ENCODE measurements at regions of chr11 and their contacts with region 1.

Region 1: DNA sequence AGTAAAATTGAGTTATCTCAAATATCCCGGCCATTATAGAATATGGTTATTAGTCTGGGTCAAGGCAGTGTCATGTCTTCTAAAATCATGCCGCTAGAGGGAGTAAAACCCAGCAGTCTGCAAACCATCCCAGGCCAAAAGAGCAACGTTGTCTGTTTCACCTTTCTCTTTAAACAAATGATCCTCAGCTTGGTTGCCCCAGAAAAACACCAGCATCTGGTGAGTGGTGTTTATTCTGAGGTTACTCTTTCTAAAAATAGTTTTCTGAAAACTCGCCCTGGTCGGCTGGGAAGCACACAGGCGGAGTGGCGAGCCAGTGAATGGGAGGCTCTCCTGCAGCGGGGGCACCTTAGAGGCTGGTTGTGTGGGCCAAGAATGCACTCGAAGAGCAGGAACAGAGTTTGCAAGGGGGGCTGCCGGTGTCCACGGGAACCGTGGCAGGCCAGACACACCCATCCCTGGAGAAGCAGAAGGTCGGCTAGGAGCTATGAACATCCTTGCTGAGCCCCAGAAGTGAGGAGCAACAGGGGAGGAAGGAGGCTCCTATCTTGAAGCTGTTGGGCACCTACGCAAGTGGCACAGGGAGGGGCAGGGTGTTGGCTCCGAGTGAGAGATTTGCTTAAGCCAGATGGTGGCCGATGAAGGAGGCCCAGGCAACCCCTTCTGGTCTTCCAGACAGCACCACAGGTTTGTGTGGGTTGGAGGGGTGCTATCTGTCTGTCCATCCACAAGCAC is 297.1 kb downstream of the ETS1 start:
- DNase-seq: peak; percentile 32 to 68 (median 59)
- ATAC-seq: peak; percentile 85 to 88
- H3K4me3 ChIP-seq: no peak overlapping the region
- H3K27ac ChIP-seq: peak overlapping the region; percentile 7
- H3K4me1 ChIP-seq: no peaks in the 10 kb centered on the region
- H3K27me3 ChIP-seq: no peaks in the 10 kb centered on the region

Region 2: GRCh38 chr11:128467610-128468041 is 177.4 kb after region 1 on chr11:
- intact Hi-C with region 1: loop called in 1 of 4 experiments (anchors 5 kb)
- DNase-seq: peak; percentile 50 to 65 (median 63)
- ATAC-seq: peak; percentile 32 to 48
- H3K4me3 ChIP-seq: no peak overlapping the region
- H3K27ac ChIP-seq: peak overlapping the region; percentile 79
- H3K4me1 ChIP-seq: peaks cover 36% of the 10 kb centered on the region
- H3K27me3 ChIP-seq: no peaks in the 10 kb centered on the region

Region 3: DNA sequence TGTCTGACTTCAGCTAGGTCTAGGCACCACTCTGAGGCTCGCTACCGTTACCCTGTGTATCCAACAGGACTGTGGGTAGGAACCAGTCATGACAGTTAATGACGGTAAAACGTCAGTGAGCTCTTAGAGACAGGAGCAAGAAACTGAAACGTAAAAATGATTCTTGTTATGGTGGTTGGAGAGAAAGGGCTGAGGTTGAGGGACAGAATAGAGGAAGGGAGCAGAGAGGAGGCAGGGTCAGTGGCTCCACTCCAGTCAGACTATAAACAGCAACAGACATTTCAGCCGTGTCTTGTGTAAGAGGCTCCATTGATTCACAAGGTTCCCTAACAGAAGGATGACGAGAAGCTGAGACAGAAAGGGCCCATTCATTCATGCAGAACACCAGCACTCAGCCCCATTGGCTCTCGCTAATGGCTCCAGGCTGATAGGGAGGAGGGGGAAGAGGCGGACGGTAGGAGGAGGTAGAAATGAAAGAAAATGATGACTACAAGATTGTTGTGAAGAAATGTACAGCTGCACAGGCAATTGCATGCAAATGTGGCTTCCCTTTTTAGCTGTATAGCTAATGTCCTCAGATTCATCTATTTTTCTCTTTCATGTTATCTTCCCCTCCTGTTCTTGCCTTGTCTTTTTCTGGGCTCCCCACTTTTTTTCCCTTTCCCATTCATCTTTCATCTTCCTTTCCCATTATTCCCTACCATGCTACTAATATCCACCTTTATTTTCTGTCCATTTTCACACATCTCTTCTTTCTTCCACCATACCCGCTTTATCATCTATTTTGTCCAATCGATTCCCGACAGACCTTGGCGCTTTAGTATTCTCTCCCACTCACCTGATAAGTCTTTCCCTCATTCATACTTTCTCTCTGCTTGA is 262.7 kb after region 1 on chr11:
- intact Hi-C with region 1: loop called in 1 of 4 experiments (anchors 10 kb)
- DNase-seq: peak in 1 of 3 donors; percentile 35
- ATAC-seq: peak; percentile 17 to 35
- H3K4me3 ChIP-seq: no peak overlapping the region
- H3K27ac ChIP-seq: peak overlapping the region; percentile 15
- H3K4me1 ChIP-seq: peaks cover 12% of the 10 kb centered on the region
- H3K27me3 ChIP-seq: no peaks in the 10 kb centered on the region

Region 4: GRCh38 chr11:128624269-128625175 is 334.2 kb after region 1 on chr11:
- intact Hi-C with region 1: loop called in 1 of 4 experiments (anchors 5 kb)
- DNase-seq: peak in 1 of 3 donors; percentile 50
- ATAC-seq: no peak
- H3K4me3 ChIP-seq: no peak overlapping the region
- H3K27ac ChIP-seq: no peak overlapping the region
- H3K4me1 ChIP-seq: peaks cover 4% of the 10 kb centered on the region
- H3K27me3 ChIP-seq: no peaks in the 10 kb centered on the region

Region 5: GRCh38 chr11:128630367-128631230 is 340.3 kb after region 1 on chr11:
- intact Hi-C with region 1: loop called (anchors 2 to 5 kb)
- DNase-seq: peak; percentile 90 to 93 (median 93)
- ATAC-seq: peak; percentile 76 to 88
- H3K4me3 ChIP-seq: no peak overlapping the region
- H3K27ac ChIP-seq: no peak overlapping the region
- H3K4me1 ChIP-seq: peaks cover 2% of the 10 kb centered on the region
- H3K27me3 ChIP-seq: no peaks in the 10 kb centered on the region

Region 6: GRCh38 chr11:128831174-128832120 is 541.2 kb after region 1 on chr11:
- intact Hi-C with region 1: loop called in 2 of 4 experiments (anchors 10 kb)
- DNase-seq: peak; percentile 76 to 91 (median 90)
- ATAC-seq: peak; percentile 70 to 77
- H3K4me3 ChIP-seq: no peak overlapping the region
- H3K27ac ChIP-seq: no peak overlapping the region
- H3K4me1 ChIP-seq: peaks cover 7% of the 10 kb centered on the region
- H3K27me3 ChIP-seq: no peaks in the 10 kb centered on the region

Measured in right cardiac atrium (tissue), 5 donors.